ENCODE measurements at regions of chr14 and their contacts with region 1.

Region 1: GRCh38 chr14:24299255-24300195 is at the starts of genes DHRS1 and NOP9:
- DNase-seq: peak; percentile 95 to 96
- ATAC-seq: peak; percentile 79 to 89 (median 82)
- H3K4me3 ChIP-seq: peak within 1 kb of the TSS; percentile 51
- H3K4me3 Mint-ChIP-seq: peak within 1 kb of the TSS; percentile 91
- H3K27ac ChIP-seq: peak within 1 kb of the TSS; percentile 61
- H3K27ac Mint-ChIP-seq: peak within 1 kb of the TSS; percentile 91 to 92
- H3K4me1 ChIP-seq: peaks cover 25% of the 10 kb centered on the region
- H3K4me1 Mint-ChIP-seq: peaks cover 42 to 55% of the 10 kb centered on the region in 2 donors
- H3K27me3 ChIP-seq: no peaks in the 10 kb centered on the region
- H3K27me3 Mint-ChIP-seq: no peaks in the 10 kb centered on the region
- CTCF ChIP-seq: no peak
- total RNA-seq, gene DHRS1: 39.8 to 59.0 (median 43.3) TPM
- total RNA-seq, gene NOP9: 34.9 to 47.8 (median 39.2) TPM

Region 2: GRCh38 chr14:24188251-24189058 is 111.1 kb before region 1 on chr14 and contains the start of gene IPO4:
- intact Hi-C with region 1: loop called (anchors 2 kb)
- DNase-seq: peak; percentile 87 to 98
- ATAC-seq: peak; percentile 92 to 97 (median 93)
- H3K4me3 ChIP-seq: peak within 1 kb of the TSS; percentile 56
- H3K4me3 Mint-ChIP-seq: peak within 1 kb of the TSS; percentile 85
- H3K27ac ChIP-seq: peak within 1 kb of the TSS; percentile 68
- H3K27ac Mint-ChIP-seq: peak within 1 kb of the TSS; percentile 83 to 97
- H3K4me1 ChIP-seq: peaks cover 23% of the 10 kb centered on the region
- H3K4me1 Mint-ChIP-seq: peaks cover 26 to 34% of the 10 kb centered on the region in 2 donors
- H3K27me3 ChIP-seq: no peaks in the 10 kb centered on the region
- H3K27me3 Mint-ChIP-seq: no peaks in the 10 kb centered on the region
- CTCF ChIP-seq: no peak
- total RNA-seq, gene IPO4: 46.2 to 61.5 (median 51.9) TPM

Region 3: DNA sequence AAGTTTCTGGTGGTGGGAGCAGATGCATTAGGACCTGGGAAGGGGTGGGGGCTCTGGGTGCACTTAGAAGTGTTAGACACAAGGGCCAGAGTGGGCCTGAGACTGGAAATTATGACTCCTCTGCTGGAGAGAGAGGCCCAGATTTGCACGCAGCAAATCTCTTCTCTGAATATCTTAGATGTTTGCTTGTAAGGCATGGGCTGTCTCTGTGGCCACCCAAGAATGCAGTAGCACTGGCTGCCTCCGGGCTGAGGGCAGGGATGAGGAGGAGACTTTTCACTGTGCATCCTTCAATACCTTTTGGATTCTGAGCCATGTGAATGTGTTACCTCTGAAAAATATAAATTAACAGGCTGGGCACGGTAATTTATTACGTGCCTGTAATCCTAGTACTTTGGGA is 14.2 kb before region 1 on chr14:
- intact Hi-C with region 1: no loop called
- DNase-seq: no peak
- ATAC-seq: no peak
- H3K4me3 ChIP-seq: no peak overlapping the region
- H3K4me3 Mint-ChIP-seq: no peak overlapping the region
- H3K27ac ChIP-seq: no peak overlapping the region
- H3K27ac Mint-ChIP-seq: no peak overlapping the region
- H3K4me1 ChIP-seq: peaks cover 16% of the 10 kb centered on the region
- H3K4me1 Mint-ChIP-seq: peaks cover 11 to 12% of the 10 kb centered on the region in 2 donors
- H3K27me3 ChIP-seq: no peaks in the 10 kb centered on the region
- H3K27me3 Mint-ChIP-seq: no peaks in the 10 kb centered on the region
- CTCF ChIP-seq: no peak

Region 4: DNA sequence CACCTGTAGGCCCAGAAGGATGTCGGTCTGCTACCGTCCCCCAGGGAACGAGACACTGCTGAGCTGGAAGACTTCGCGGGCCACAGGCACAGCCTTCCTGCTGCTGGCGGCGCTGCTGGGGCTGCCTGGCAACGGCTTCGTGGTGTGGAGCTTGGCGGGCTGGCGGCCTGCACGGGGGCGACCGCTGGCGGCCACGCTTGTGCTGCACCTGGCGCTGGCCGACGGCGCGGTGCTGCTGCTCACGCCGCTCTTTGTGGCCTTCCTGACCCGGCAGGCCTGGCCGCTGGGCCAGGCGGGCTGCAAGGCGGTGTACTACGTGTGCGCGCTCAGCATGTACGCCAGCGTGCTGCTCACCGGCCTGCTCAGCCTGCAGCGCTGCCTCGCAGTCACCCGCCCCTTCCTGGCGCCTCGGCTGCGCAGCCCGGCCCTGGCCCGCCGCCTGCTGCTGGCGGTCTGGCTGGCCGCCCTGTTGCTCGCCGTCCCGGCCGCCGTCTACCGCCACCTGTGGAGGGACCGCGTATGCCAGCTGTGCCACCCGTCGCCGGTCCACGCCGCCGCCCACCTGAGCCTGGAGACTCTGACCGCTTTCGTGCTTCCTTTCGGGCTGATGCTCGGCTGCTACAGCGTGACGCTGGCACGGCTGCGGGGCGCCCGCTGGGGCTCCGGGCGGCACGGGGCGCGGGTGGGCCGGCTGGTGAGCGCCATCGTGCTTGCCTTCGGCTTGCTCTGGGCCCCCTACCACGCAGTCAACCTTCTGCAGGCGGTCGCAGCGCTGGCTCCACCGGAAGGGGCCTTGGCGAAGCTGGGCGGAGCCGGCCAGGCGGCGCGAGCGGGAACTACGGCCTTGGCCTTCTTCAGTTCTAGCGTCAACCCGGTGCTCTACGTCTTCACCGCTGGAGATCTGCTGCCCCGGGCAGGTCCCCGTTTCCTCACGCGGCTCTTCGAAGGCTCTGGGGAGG is 11.4 kb after region 1 on chr14 and contains the start of gene LTB4R:
- intact Hi-C with region 1: loop called (anchors 1 kb)
- DNase-seq: peak; percentile 69 to 87
- ATAC-seq: peak; percentile 75 to 87 (median 81)
- H3K4me3 ChIP-seq: peak within 1 kb of the TSS; percentile 45
- H3K4me3 Mint-ChIP-seq: peak within 1 kb of the TSS; percentile 88
- H3K27ac ChIP-seq: peak within 1 kb of the TSS; percentile 84
- H3K27ac Mint-ChIP-seq: peak within 1 kb of the TSS; percentile 94 to 96
- H3K4me1 ChIP-seq: peaks cover 77% of the 10 kb centered on the region
- H3K4me1 Mint-ChIP-seq: peaks cover 71 to 92% of the 10 kb centered on the region in 2 donors
- H3K27me3 ChIP-seq: no peaks in the 10 kb centered on the region
- H3K27me3 Mint-ChIP-seq: no peaks in the 10 kb centered on the region
- CTCF ChIP-seq: peak; percentile 37
- total RNA-seq, gene LTB4R: 33.5 to 55.7 (median 49.7) TPM

Region 5: GRCh38 chr14:24473211-24473610 is 173.7 kb after region 1 on chr14:
- intact Hi-C with region 1: no loop called
- DNase-seq: no peak
- ATAC-seq: no peak
- H3K4me3 ChIP-seq: no peak overlapping the region
- H3K4me3 Mint-ChIP-seq: no peak overlapping the region
- H3K27ac ChIP-seq: no peak overlapping the region
- H3K27ac Mint-ChIP-seq: no peak overlapping the region
- H3K4me1 ChIP-seq: no peaks in the 10 kb centered on the region
- H3K4me1 Mint-ChIP-seq: peaks cover 7 to 11% of the 10 kb centered on the region in 2 donors
- H3K27me3 ChIP-seq: no peaks in the 10 kb centered on the region
- H3K27me3 Mint-ChIP-seq: no peaks in the 10 kb centered on the region
- CTCF ChIP-seq: no peak